Panc1 (cell line): ENCODE measurements at regions of chr2 and their contacts with region 1.

Region 1: GRCh38 chr2:24392542-24393059 is 32.3 kb upstream of the ITSN2 start:
- DNase-seq: no peak
- ATAC-seq: no peak
- H3K4me3 ChIP-seq: no peak overlapping the region
- H3K27ac ChIP-seq: no peak overlapping the region
- H3K4me1 ChIP-seq: no peaks in the 10 kb centered on the region
- H3K27me3 ChIP-seq: no peaks in the 10 kb centered on the region
- CTCF ChIP-seq: no peak

Region 2: GRCh38 chr2:24075915-24076848 is 316.4 kb before region 1 on chr2 and contains the start of gene SF3B6:
- CTCF ChIA-PET with region 1: no interaction called
- POLR2A ChIA-PET with region 1: no interaction called
- in situ Hi-C with region 1: no loop called
- intact Hi-C with region 1: no loop called
- DNase-seq: peak; percentile 99
- ATAC-seq: peak; percentile 96
- H3K4me3 ChIP-seq: peak within 1 kb of the TSS; percentile 96 to 97
- H3K27ac ChIP-seq: peak within 1 kb of the TSS; percentile 94
- H3K4me1 ChIP-seq: peaks cover 13% of the 10 kb centered on the region; the same call in 1 of the 2 replicates
- H3K27me3 ChIP-seq: no peaks in the 10 kb centered on the region
- CTCF ChIP-seq: no peak
- total RNA-seq, gene SF3B6: 129 TPM

Region 3: GRCh38 chr2:24404491-24404921 is 11.9 kb after region 1 on chr2:
- CTCF ChIA-PET with region 1: no interaction called
- POLR2A ChIA-PET with region 1: interaction called, 13 read pairs
- in situ Hi-C with region 1: no loop called
- intact Hi-C with region 1: no loop called
- DNase-seq: no peak
- ATAC-seq: no peak
- H3K4me3 ChIP-seq: no peak overlapping the region
- H3K27ac ChIP-seq: no peak overlapping the region
- H3K4me1 ChIP-seq: no peaks in the 10 kb centered on the region
- H3K27me3 ChIP-seq: no peaks in the 10 kb centered on the region
- CTCF ChIP-seq: no peak